CD8-positive, alpha-beta T cell (primary cell): ENCODE measurements at regions of chr22 and their contacts with region 1.

Region 1: DNA sequence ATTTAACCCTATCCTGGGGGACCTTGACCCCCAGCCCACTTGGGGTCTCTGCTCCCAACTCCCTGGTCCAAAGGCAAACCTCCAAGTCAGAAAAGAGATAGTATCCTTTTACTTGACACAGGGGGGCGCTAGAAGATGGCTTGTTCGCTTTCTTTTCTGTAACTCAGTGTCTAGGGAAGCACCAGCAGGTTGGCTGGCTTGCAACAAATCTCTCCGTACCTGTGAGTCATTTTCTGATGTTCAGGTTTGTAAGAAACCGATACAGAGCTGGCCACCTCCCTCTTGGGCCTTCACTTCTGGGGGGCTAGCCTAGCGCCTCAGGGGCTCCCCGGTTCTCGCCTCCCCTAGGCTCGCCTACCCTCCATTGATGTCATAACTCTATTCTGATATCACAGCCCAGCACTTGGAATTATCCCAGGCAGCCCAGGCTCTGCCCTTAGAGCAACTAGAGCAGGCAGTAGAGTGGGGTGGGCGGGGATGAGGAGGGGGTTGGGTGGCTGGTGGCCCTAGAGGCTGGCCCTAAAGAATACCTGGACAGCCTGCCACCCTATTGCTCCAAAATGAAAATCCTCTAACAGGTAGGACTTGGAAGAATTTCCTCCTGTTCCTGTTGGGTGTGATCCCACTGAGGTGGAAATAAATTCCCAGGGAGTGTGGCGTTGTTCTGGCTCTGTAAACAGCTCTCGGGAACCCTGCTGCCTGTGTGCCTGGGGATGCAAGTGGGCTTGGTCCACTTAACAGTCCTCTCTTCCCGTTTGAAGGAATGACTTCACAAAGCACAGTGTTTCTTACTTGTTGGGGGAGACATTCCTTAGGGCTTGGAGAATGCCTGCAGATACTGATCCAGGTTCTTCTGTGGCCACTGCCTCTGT is 69.4 kb downstream of the OSBP2 start:
- DNase-seq: peak in 8 of 9 experiments; percentile 7 to 78 (median 48)
- ATAC-seq: peak; percentile 90
- H3K4me3 ChIP-seq: no peak overlapping the region
- H3K4me3 Mint-ChIP-seq: no peak overlapping the region
- H3K27ac ChIP-seq: no peak overlapping the region
- H3K27ac Mint-ChIP-seq: no peak overlapping the region
- H3K4me1 ChIP-seq: no peaks in the 10 kb centered on the region
- H3K4me1 Mint-ChIP-seq: peaks cover 2% of the 10 kb centered on the region
- H3K27me3 ChIP-seq: no peaks in the 10 kb centered on the region
- H3K27me3 Mint-ChIP-seq: no peaks in the 10 kb centered on the region
- CTCF ChIP-seq: peak; percentile 52

Region 2: DNA sequence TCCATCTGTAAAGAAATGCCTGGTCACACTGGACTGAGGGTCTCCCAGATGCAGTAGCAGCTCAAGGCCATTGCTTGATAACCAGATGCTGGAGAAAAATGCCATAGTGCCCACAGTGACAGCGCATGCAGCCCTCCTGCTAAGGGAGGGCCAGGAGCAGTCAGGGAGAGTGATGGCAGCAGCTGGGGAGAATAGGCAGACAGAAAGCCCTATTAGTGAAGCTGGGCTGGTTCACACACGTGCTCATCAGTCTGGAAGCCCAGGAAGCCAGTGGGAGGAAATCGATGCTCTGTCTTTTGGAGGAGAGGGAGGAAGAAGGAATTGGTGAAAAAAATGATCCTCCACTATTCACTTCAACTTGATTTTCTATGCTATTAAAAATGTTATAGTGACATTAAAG is 13.5 kb after region 1 on chr22:
- CTCF ChIA-PET with region 1: interaction called, 12 read pairs
- POLR2A ChIA-PET with region 1: interaction called, 3 read pairs
- intact Hi-C with region 1: no loop called
- DNase-seq: no peak
- ATAC-seq: no peak
- H3K4me3 ChIP-seq: no peak overlapping the region
- H3K4me3 Mint-ChIP-seq: no peak overlapping the region
- H3K27ac ChIP-seq: no peak overlapping the region
- H3K27ac Mint-ChIP-seq: no peak overlapping the region
- H3K4me1 ChIP-seq: no peaks in the 10 kb centered on the region
- H3K4me1 Mint-ChIP-seq: no peaks in the 10 kb centered on the region
- H3K27me3 ChIP-seq: peaks cover 0 to 2% of the 10 kb centered on the region in 2 experiments
- H3K27me3 Mint-ChIP-seq: peaks cover 2% of the 10 kb centered on the region
- CTCF ChIP-seq: no peak

Region 3: GRCh38 chr22:31148953-31149627 is 385.0 kb after region 1 on chr22:
- CTCF ChIA-PET with region 1: no interaction called
- POLR2A ChIA-PET with region 1: no interaction called
- intact Hi-C with region 1: loop called (anchors 1 to 5 kb)
- DNase-seq: peak in 5 of 9 experiments; percentile 16 to 53 (median 40)
- ATAC-seq: peak; percentile 56
- H3K4me3 ChIP-seq: no peak overlapping the region
- H3K4me3 Mint-ChIP-seq: no peak overlapping the region
- H3K27ac ChIP-seq: no peak overlapping the region
- H3K27ac Mint-ChIP-seq: no peak overlapping the region
- H3K4me1 ChIP-seq: no peaks in the 10 kb centered on the region
- H3K4me1 Mint-ChIP-seq: no peaks in the 10 kb centered on the region
- H3K27me3 ChIP-seq: no peaks in the 10 kb centered on the region
- H3K27me3 Mint-ChIP-seq: peaks cover 3% of the 10 kb centered on the region
- CTCF ChIP-seq: no peak